ENCODE measurements at regions of chr1 and their contacts with region 1.

Region 1: GRCh38 chr1:211514030-211514754 is 22.2 kb upstream of the RD3 start:
- DNase-seq: peak; percentile 92 to 97
- ATAC-seq: peak; percentile 72 to 86
- H3K4me3 ChIP-seq: no peak overlapping the region
- H3K27ac ChIP-seq: peak overlapping the region; percentile 94 to 95
- H3K4me1 ChIP-seq: peaks cover 31% of the 10 kb centered on the region
- CTCF ChIP-seq: peak; percentile 87
- EP300 ChIP-seq: no peak
- POLR2A ChIP-seq: peak; percentile 35; the same call in 1 of the 2 replicates
- RAD21 ChIP-seq: peak; percentile 92

Region 2: DNA sequence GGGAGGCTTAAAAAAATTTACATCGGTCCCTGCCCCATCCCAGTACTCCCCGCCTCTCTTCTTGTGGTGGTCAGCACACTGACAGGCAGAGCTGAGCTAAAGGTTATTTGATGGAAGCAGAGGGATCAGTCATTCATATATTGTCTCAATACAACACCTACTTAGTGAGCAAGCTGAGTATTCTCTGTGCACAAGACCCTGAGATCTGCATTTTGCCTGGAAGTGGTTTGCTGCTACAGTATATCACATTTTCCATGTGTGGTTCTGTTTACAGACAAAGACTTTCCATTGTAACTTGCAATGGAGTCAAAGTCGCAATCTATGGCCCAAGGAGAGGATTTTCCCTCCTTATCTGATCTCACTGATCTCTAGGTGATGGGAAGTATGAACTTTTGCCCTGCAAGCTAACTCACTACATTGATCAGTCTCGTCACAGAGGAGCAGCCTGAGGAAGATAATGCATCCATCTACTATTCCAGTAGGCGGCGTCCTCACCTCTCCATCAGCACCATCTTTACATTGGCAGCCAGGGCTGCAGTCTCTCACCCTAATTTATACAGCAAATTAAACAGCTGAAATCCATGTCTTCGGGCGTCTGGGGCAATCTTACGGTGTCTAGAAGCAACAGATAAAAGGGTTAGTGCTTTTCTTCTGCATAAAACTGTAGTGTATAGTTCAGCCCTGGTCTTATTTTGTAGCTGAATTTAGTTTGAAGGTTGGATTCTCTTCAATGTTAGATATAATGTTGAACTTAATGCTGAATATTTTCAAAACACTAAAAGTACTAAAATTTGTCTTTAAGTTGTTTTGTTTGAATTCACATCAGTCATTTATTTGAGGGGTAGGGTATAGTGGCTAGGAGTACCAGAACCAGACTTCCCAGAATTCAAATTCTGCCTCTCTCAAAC is 190.8 kb before region 1 on chr1:
- CTCF ChIA-PET with region 1: interaction called, 135 read pairs
- POLR2A ChIA-PET with region 1: interaction called, 5 read pairs
- DNase-seq: peak; percentile 66 to 72
- ATAC-seq: peak; percentile 80 to 87
- H3K4me3 ChIP-seq: no peak overlapping the region
- H3K27ac ChIP-seq: no peak overlapping the region
- H3K4me1 ChIP-seq: peaks cover 11% of the 10 kb centered on the region
- CTCF ChIP-seq: peak; percentile 92
- EP300 ChIP-seq: no peak
- POLR2A ChIP-seq: no peak
- RAD21 ChIP-seq: peak; percentile 82 to 90

Region 3: GRCh38 chr1:211476200-211476849 is 37.9 kb before region 1 on chr1:
- CTCF ChIA-PET with region 1: interaction called, 99 read pairs
- POLR2A ChIA-PET with region 1: no interaction called
- DNase-seq: peak; percentile 67 to 72
- ATAC-seq: peak; percentile 83 to 94; a peak in 5 of 6 replicates
- H3K4me3 ChIP-seq: no peak overlapping the region
- H3K27ac ChIP-seq: no peak overlapping the region
- H3K4me1 ChIP-seq: 0 out of 3 replicates have a peak, but pooled peaks cover 7% of the 10 kb centered on the region
- CTCF ChIP-seq: peak; percentile 90
- EP300 ChIP-seq: no peak
- POLR2A ChIP-seq: no peak
- RAD21 ChIP-seq: peak; percentile 53 to 61

Region 4: DNA sequence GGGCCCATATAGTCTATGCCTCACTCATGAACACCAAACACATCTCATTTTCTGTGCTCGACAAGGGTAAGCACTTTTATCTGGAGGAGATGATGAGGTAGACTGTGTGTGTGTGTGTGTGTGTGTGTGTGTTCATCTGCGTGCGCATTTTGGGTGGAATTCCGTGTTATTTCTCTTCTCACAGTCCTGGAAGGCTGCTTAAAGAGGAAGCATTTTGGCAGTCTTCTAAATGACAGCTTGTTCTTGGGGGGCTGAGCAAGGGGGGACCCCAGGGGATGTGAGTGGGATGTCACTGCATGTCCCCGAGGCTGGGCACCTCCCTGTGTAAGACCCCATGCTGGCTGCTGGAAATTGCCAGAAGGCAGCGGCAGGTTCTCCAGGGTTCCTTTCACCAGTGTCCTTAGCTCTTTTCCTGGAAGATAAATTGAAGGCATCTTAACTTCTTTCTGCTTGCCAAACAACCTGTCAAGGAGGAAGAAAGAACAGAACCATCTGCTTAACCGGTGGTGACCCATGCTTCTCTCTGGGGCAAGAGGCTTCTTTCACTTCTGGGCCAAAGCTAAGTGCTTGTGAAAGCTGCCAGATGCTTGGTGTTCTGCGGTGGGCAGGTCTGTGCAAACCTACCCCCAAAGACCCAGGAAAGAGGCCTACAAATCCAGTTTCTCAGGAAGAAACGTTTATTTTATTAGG is 12.3 kb before region 1 on chr1:
- CTCF ChIA-PET with region 1: interaction called, 82 read pairs
- POLR2A ChIA-PET with region 1: interaction called, 3 read pairs
- DNase-seq: no peak
- ATAC-seq: no peak
- H3K4me3 ChIP-seq: no peak overlapping the region
- H3K27ac ChIP-seq: no peak overlapping the region
- H3K4me1 ChIP-seq: no peaks in the 10 kb centered on the region
- CTCF ChIP-seq: no peak
- EP300 ChIP-seq: no peak
- POLR2A ChIP-seq: no peak
- RAD21 ChIP-seq: no peak

Region 5: GRCh38 chr1:211551628-211552460 is 37.7 kb after region 1 on chr1:
- CTCF ChIA-PET with region 1: interaction called, 27 read pairs
- POLR2A ChIA-PET with region 1: interaction called, 7 read pairs
- DNase-seq: peak in 1 of 2 experiments; percentile 29
- ATAC-seq: peak in 1 of 2 experiments; percentile 75; a peak in 3 of 6 replicates
- H3K4me3 ChIP-seq: no peak overlapping the region
- H3K27ac ChIP-seq: peak overlapping the region; percentile 34 to 69; a peak in 5 of 6 replicates
- H3K4me1 ChIP-seq: peaks cover 13% of the 10 kb centered on the region
- CTCF ChIP-seq: no peak
- EP300 ChIP-seq: peak in 1 of 2 experiments; percentile 45; a peak in 1 of 5 replicates
- POLR2A ChIP-seq: no peak
- RAD21 ChIP-seq: no peak

Region 6: GRCh38 chr1:211654838-211655787 is 140.9 kb after region 1 on chr1:
- CTCF ChIA-PET with region 1: interaction called, 127 read pairs
- POLR2A ChIA-PET with region 1: interaction called, 3 read pairs
- DNase-seq: peak; percentile 66 to 85
- ATAC-seq: peak; percentile 90 to 97
- H3K4me3 ChIP-seq: no peak overlapping the region
- H3K27ac ChIP-seq: peak overlapping the region; percentile 39 to 64; a peak in 4 of 6 replicates
- H3K4me1 ChIP-seq: peaks cover 25% of the 10 kb centered on the region
- CTCF ChIP-seq: peak; percentile 97
- EP300 ChIP-seq: no peak
- POLR2A ChIP-seq: no peak
- RAD21 ChIP-seq: peak; percentile 99